ENCODE measurements at regions of chr1 and their contacts with region 1.

Region 1: DNA sequence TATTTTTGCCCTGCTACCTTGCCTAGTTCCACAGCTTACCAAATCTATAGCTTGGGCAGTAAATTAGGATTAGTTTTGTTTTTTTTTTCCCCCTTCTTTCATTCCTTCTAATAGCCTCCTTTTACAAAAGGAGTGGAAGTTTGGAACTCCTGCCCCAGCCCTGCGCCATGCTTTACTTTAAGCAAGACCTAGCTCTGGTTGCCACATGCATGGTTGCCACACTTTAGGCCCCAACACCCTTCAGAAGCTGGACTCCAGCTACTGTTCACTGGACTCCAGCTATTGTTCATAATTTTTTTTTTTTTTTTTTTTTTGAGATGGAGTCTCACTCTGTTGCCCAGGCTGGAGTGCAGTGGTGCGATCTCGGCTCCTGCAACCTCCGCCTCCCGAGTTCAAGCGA is 115.8 kb downstream of the NR5A2 start:
- DNase-seq: no peak
- ATAC-seq: no peak
- H3K4me3 ChIP-seq: no peak overlapping the region
- H3K4me3 Mint-ChIP-seq: no peak overlapping the region
- H3K27ac ChIP-seq: no peak overlapping the region
- H3K27ac Mint-ChIP-seq: no peak overlapping the region
- H3K4me1 ChIP-seq: no peaks in the 10 kb centered on the region
- H3K4me1 Mint-ChIP-seq: peaks cover 0 to 4% (median 2%) of the 10 kb centered on the region in 3 donors
- H3K27me3 ChIP-seq: no peaks in the 10 kb centered on the region
- H3K27me3 Mint-ChIP-seq: peaks cover 0 to 2% of the 10 kb centered on the region in 2 donors

Region 2: GRCh38 chr1:201171063-201172036 is 1028.0 kb after region 1 on chr1:
- CTCF ChIA-PET with region 1: interaction called in 1 of 2 experiments, 16 read pairs
- POLR2A ChIA-PET with region 1: no interaction called
- DNase-seq: peak in 28 of 35 experiments; percentile 3 to 64 (median 22)
- ATAC-seq: peak; percentile 49 to 60 (median 57)
- H3K4me3 ChIP-seq: peak overlapping the region; percentile 57 to 88
- H3K4me3 Mint-ChIP-seq: peak overlapping the region; percentile 79 to 84 (median 81)
- H3K27ac ChIP-seq: peak overlapping the region; percentile 10
- H3K27ac Mint-ChIP-seq: peak overlapping the region in 1 of 2 donors; percentile 66
- H3K4me1 ChIP-seq: peaks cover 0 to 18% of the 10 kb centered on the region in 2 experiments
- H3K4me1 Mint-ChIP-seq: peaks cover 6 to 16% (median 8%) of the 10 kb centered on the region in 3 donors
- H3K27me3 ChIP-seq: peaks cover 4 to 22% of the 10 kb centered on the region in 2 experiments
- H3K27me3 Mint-ChIP-seq: peaks cover 5 to 15% of the 10 kb centered on the region in 2 donors

Measured in T-cell (primary cell).